A673 (cell line): ENCODE measurements at regions of chr18 and their contacts with region 1.

Region 1: GRCh38 chr18:50429207-50429948 is 54.5 kb downstream of the SKA1 start:
- DNase-seq: peak; percentile 50
- H3K4me3 ChIP-seq: no peak overlapping the region
- H3K27ac ChIP-seq: no peak overlapping the region
- H3K4me1 ChIP-seq: no peaks in the 10 kb centered on the region
- H3K27me3 ChIP-seq: no peaks in the 10 kb centered on the region
- CTCF ChIP-seq: peak; percentile 63

Region 2: DNA sequence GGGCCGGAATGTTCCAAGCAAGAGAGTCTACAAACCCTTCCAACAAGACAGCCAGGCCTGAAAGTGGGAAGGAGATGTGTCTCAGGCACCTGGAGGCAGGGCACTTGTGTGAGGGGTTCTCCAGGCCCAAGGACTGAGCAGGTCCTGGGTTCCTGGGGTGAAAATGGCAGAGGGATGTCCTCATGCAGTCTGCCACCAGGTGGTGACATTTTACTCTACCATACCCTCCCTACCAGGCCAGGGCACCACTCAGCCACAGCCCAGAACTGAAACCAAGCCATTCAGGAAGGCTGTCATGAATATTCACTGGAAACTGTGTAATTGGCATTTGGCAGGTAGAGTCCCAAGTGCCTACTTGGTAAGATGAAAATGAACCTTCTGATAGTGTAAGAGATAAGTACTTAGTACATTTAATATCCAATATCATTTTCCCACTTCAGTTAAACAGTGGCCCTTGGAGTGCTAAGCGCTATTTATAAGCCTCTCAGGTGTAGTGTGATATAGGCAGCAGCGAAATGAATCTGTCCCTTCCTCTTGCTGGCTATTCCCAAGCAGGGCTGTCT is 419.5 kb before region 1 on chr18:
- CTCF ChIA-PET with region 1: interaction called, 9 read pairs
- POLR2A ChIA-PET with region 1: no interaction called
- intact Hi-C with region 1: loop called (anchors 10 kb)
- DNase-seq: peak; percentile 59
- H3K4me3 ChIP-seq: no peak overlapping the region
- H3K27ac ChIP-seq: no peak overlapping the region
- H3K4me1 ChIP-seq: no peaks in the 10 kb centered on the region
- H3K27me3 ChIP-seq: peaks cover 25% of the 10 kb centered on the region
- CTCF ChIP-seq: peak; percentile 68

Region 3: DNA sequence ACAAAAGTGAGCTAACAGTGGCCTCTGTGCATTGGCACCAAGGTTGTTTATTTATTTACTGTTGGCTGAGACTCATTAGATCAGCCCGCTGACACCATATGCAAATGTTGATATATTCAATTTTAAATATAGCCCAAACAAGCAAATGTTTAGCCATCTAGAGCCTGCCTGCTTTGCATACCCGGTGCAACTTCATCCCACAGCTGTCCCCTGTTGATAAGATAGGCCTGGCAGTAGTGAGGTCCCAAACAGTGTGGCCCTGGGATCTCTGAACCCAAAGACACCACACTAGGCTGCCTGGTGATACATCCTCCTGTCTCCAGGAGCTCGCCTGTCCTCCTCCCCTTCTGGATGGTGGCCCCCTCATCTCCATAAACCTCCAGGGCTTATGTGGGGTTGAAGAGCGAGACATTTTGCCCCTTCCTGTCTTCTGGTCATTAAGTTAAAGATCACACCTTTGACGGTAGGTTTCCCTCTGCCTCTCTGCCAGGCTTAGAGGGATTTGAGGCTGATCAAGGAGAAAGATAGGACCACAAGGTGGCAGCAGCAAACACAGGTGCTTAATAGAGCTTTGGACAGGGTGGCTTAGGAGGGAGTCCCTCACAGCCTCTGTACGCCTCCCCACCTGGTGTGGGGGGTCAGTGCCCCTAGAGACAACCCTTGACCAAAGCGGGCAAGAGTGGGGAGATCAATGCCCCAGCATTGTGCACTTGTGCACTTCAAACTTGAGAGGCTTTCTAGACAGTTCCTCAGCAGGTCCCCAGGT is 210.8 kb before region 1 on chr18:
- CTCF ChIA-PET with region 1: interaction called, 4 read pairs
- POLR2A ChIA-PET with region 1: no interaction called
- intact Hi-C with region 1: loop called (anchors 5 kb)
- DNase-seq: peak; percentile 20
- H3K4me3 ChIP-seq: no peak overlapping the region
- H3K27ac ChIP-seq: no peak overlapping the region
- H3K4me1 ChIP-seq: no peaks in the 10 kb centered on the region
- H3K27me3 ChIP-seq: peaks cover 21% of the 10 kb centered on the region
- CTCF ChIP-seq: peak; percentile 55

Region 4: DNA sequence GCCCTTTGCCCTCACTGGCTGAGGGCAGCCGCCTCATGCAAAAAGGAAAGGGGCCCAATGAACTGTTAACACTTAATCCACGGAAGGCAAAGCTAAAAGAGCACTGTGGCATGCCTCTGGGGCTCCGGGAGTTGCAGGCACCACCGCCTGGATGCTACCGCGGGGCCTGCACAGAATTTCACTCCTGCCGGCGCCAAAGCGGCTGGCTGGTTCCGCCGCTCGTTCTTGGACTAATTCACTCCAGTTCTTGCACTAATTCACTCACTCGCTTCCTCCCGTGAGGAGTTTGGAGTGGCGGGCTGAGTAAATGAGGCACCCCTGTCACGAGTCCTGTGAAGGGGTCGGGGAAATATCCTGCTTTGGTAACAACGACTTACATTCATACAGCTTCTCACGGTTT is 116.6 kb after region 1 on chr18:
- CTCF ChIA-PET with region 1: no interaction called
- POLR2A ChIA-PET with region 1: no interaction called
- intact Hi-C with region 1: no loop called
- DNase-seq: no peak
- H3K4me3 ChIP-seq: no peak overlapping the region
- H3K27ac ChIP-seq: no peak overlapping the region
- H3K4me1 ChIP-seq: no peaks in the 10 kb centered on the region
- H3K27me3 ChIP-seq: no peaks in the 10 kb centered on the region
- CTCF ChIP-seq: no peak